ENCODE measurements at regions of chr9 and their contacts with region 1.

Region 1: GRCh38 chr9:72592502-72593403 is 71.3 kb downstream of the TMC1 start:
- DNase-seq: no peak
- ATAC-seq: peak; percentile 91

Region 2: DNA sequence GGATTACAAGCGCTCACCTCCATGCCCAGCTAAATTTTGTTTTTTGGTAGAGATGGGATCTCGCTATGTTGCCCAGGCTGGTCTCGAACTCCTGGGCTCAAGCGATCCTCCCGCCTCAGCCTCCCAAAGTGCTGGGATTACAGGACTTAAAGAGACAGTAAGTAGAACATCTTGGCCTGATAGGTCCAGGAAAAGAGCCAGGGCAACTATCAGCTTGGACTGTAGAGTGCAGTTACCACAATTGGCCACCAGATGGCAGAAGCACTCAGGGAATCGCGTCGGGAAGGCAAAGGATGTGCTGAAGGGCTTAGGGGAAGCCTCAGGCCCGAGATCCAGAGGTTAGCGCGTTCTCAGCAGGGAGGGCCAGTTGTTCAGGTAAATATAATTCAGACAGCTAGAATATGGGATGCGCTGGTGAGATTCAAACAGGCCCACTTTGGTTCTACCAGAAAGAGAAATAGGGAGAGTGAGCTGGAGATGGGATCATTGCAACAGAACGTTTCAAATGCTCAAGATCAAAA is 553.8 kb before region 1 on chr9:
- intact Hi-C with region 1: loop called (anchors 10 kb)
- DNase-seq: peak; percentile 75
- ATAC-seq: peak; percentile 89

Region 3: GRCh38 chr9:72292256-72292682 is 300.5 kb before region 1 on chr9:
- intact Hi-C with region 1: loop called (anchors 2 kb)
- DNase-seq: no peak
- ATAC-seq: peak; percentile 63

Region 4: GRCh38 chr9:72364679-72365524 is 227.9 kb before region 1 on chr9 and contains the start of gene ZFAND5:
- intact Hi-C with region 1: loop called (anchors 10 kb)
- DNase-seq: peak; percentile 100
- ATAC-seq: peak; percentile 93
- total RNA-seq, gene ZFAND5: 180 TPM

Region 5: GRCh38 chr9:72827950-72828731 is 235.4 kb after region 1 on chr9:
- intact Hi-C with region 1: loop called (anchors 10 kb)
- DNase-seq: no peak
- ATAC-seq: no peak

Measured in Right ventricle myocardium superior (tissue), 1 donor.